Posterior cingulate gyrus (tissue), 11 donors: ENCODE measurements at regions of chr12 and their contacts with region 1.

Region 1: DNA sequence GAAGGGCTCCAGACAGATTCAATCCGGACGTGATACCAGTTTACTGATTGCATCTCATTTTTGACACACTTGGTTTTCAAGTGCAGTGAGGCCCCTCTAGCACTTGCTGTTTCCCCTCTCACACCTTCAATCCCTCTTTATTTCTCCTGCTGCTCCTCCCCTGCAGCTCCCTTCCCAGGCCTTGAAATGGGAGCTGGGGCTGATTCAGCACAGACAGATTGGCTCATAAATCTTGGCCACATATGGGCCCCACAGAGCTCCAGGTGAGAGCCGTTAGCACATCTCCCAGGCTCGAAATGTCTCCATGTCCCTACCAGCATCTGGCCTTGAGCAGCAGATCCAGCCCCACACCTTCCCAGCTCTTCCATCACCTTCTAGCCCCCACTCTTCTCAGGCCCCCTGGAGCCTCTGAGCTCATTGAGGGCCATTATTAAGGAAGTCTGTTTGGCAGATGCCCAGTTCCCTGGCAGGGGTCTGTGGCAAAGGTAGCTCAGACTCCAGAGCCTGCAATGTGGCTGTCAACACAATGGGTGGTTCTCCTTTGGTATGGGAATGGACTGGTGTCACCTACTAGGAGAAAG is 220.3 kb upstream of the FKBP4 start:
- DNase-seq: peak in 1 of 10 donors; percentile 8

Region 2: GRCh38 chr12:2360629-2361168 is 213.7 kb before region 1 on chr12:
- intact Hi-C with region 1: loop called (anchors 10 kb)
- DNase-seq: no peak

Region 3: GRCh38 chr12:2691006-2691344 is 116.5 kb after region 1 on chr12:
- intact Hi-C with region 1: no loop called
- DNase-seq: peak in 1 of 10 donors; percentile 82